MCF 10A (cell line): ENCODE measurements at regions of chr2 and their contacts with region 1.

Region 1: DNA sequence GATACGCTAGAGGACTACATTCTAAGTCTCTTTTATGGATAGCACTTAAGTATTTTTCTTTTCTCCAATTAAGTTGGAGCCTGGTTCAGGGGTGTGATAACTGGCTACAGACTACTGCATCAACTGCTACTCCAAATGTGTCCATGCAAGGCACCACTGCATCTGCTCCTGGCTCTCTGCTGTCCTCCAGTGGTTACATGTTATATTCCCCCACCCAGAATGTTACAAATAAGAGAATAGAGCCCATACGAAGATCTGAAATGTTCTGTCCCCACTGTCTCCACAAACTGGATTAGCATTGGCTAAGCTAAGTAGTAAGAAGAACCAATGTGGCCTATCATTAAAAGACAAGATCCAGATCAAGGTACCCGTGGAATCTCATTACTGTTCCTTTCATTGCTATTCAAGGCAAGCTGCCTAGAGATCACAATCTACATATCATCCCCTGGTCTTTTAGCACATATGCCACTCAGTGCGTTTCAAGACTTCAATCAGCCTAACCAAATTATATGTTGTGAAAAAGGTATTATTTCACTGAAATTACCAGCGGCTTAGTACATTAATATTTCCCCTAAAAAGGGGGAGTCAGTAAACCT is 308.3 kb upstream of the SLC8A1 start:
- DNase-seq: peak; percentile 64
- H3K4me3 Mint-ChIP-seq: no peak overlapping the region
- H3K27ac Mint-ChIP-seq: no peak overlapping the region
- H3K4me1 Mint-ChIP-seq: no peaks in the 10 kb centered on the region
- H3K27me3 Mint-ChIP-seq: no peaks in the 10 kb centered on the region
- CTCF ChIP-seq: peak; percentile 87

Region 2: DNA sequence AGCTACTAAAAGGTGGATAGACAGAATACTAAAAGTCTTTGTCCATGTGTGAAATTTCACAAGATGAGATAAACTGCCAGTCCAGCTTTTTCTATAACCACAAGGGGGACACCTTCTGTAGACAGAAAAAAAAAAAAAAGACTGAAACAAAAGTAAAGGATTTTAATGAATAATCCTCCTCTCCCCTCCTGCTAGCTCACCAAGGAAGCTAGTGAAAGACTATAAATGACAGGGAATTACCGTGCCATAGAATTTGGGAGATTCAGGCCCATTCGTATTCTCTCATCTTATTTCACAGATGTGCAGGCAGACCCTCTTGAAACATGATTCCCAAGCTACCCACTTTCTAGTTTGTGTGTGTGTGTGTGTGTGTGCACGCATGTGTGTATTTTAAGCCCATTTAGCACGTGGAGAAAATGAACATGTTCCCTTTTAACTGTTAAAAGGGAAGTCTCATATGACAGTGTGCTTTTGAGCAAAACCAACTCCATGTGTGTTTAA is 272.0 kb before region 1 on chr2:
- CTCF ChIA-PET with region 1: interaction called, 5 read pairs
- POLR2A ChIA-PET with region 1: no interaction called
- intact Hi-C with region 1: loop called (anchors 1 kb)
- DNase-seq: peak; percentile 51
- H3K4me3 Mint-ChIP-seq: no peak overlapping the region
- H3K27ac Mint-ChIP-seq: no peak overlapping the region
- H3K4me1 Mint-ChIP-seq: peaks cover 19% of the 10 kb centered on the region
- H3K27me3 Mint-ChIP-seq: no peaks in the 10 kb centered on the region
- CTCF ChIP-seq: peak; percentile 40